H1 (cell line): ENCODE measurements at regions of chr3 and their contacts with region 1.

Region 1: GRCh38 chr3:172984914-172985313 is 156.1 kb downstream of the SPATA16 start:
- DNase-seq: no peak
- H3K4me3 ChIP-seq: no peak overlapping the region
- H3K27ac ChIP-seq: no peak overlapping the region
- H3K4me1 ChIP-seq: no peaks in the 10 kb centered on the region
- H3K27me3 ChIP-seq: no peaks in the 10 kb centered on the region
- CTCF ChIP-seq: no peak
- EP300 ChIP-seq: no peak
- POLR2A ChIP-seq: no peak
- RAD21 ChIP-seq: no peak

Region 2: DNA sequence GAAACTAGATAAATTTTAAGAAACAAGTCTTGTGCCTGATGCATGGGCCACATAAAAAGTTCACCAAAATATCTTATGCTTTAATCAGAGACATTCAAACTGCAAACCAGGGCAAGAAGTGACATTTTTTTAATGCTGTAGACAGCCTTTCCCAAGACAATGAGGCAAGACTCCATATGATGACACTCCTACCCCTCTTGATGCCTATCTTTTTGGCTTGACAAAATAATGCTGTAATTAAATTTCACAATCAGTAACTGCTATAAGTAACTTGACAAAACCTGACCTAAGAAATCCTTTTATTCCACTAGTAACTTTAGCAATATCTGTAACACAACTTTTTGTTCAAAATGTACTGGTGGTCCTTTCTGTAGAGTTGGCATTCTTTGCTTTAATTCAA is 185.7 kb before region 1 on chr3:
- CTCF ChIA-PET with region 1: no interaction called
- POLR2A ChIA-PET with region 1: no interaction called
- DNase-seq: no peak
- H3K4me3 ChIP-seq: no peak overlapping the region
- H3K27ac ChIP-seq: no peak overlapping the region
- H3K4me1 ChIP-seq: no peaks in the 10 kb centered on the region
- H3K27me3 ChIP-seq: no peaks in the 10 kb centered on the region
- CTCF ChIP-seq: no peak
- EP300 ChIP-seq: no peak
- POLR2A ChIP-seq: no peak
- RAD21 ChIP-seq: no peak

Region 3: GRCh38 chr3:173018758-173019157 is 33.8 kb after region 1 on chr3:
- CTCF ChIA-PET with region 1: no interaction called
- POLR2A ChIA-PET with region 1: no interaction called
- DNase-seq: no peak
- H3K4me3 ChIP-seq: no peak overlapping the region
- H3K27ac ChIP-seq: no peak overlapping the region
- H3K4me1 ChIP-seq: peaks cover 0 to 5% (median under 1%) of the 10 kb centered on the region in 4 experiments; a peak in 3 of 7 replicates
- H3K27me3 ChIP-seq: no peaks in the 10 kb centered on the region
- CTCF ChIP-seq: no peak
- EP300 ChIP-seq: no peak
- POLR2A ChIP-seq: no peak
- RAD21 ChIP-seq: no peak

Region 4: DNA sequence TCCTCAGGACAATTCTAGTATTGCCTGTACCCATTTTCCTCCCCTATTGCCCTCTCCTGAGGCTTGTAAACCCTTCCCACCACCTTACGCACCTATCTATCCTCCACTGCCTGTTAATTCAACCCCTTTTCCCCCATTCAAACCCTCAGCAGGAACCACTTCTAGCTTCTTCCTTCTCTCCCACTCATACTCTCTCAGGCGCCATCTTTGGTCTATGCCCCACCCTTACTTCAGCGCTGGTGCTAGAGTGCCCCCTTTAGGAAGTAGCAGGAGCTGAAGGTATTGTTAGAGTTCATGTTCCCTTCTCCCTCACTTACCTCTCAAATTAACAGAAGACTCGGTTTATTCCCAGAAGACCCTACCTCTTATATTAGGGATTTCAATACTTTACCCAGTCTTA is 290.8 kb after region 1 on chr3:
- CTCF ChIA-PET with region 1: interaction called, 11 read pairs
- POLR2A ChIA-PET with region 1: no interaction called
- DNase-seq: no peak
- H3K4me3 ChIP-seq: no peak overlapping the region
- H3K27ac ChIP-seq: no peak overlapping the region
- H3K4me1 ChIP-seq: no peaks in the 10 kb centered on the region; a peak in 1 of 7 replicates
- H3K27me3 ChIP-seq: no peaks in the 10 kb centered on the region
- CTCF ChIP-seq: peak; percentile 24 to 59 (median 53)
- EP300 ChIP-seq: no peak
- POLR2A ChIP-seq: no peak
- RAD21 ChIP-seq: peak; percentile 81 to 85